Activated B cell treated with CpG ODN at 0.5 μM for 24 hours (primary cell): ENCODE measurements at regions of chr6 and their contacts with region 1.

Region 1: GRCh38 chr6:78538002-78538401 is 329.3 kb upstream of the IRAK1BP1 start:
- DNase-seq: no peak
- ATAC-seq: no peak
- H3K4me3 Mint-ChIP-seq: no peak overlapping the region
- H3K27ac Mint-ChIP-seq: no peak overlapping the region
- H3K4me1 Mint-ChIP-seq: no peaks in the 10 kb centered on the region
- H3K27me3 Mint-ChIP-seq: no peaks in the 10 kb centered on the region
- CTCF ChIP-seq: no peak

Region 2: GRCh38 chr6:78502386-78502887 is 35.6 kb before region 1 on chr6:
- CTCF ChIA-PET with region 1: no interaction called
- POLR2A ChIA-PET with region 1: no interaction called
- intact Hi-C with region 1: loop called (anchors 2 kb)
- DNase-seq: no peak
- ATAC-seq: no peak
- H3K4me3 Mint-ChIP-seq: no peak overlapping the region
- H3K27ac Mint-ChIP-seq: no peak overlapping the region
- H3K4me1 Mint-ChIP-seq: no peaks in the 10 kb centered on the region
- H3K27me3 Mint-ChIP-seq: no peaks in the 10 kb centered on the region
- CTCF ChIP-seq: no peak

Region 3: GRCh38 chr6:78580923-78581322 is 42.9 kb after region 1 on chr6:
- CTCF ChIA-PET with region 1: no interaction called
- POLR2A ChIA-PET with region 1: no interaction called
- intact Hi-C with region 1: no loop called
- DNase-seq: no peak
- ATAC-seq: no peak
- H3K4me3 Mint-ChIP-seq: no peak overlapping the region
- H3K27ac Mint-ChIP-seq: no peak overlapping the region
- H3K4me1 Mint-ChIP-seq: no peaks in the 10 kb centered on the region
- H3K27me3 Mint-ChIP-seq: no peaks in the 10 kb centered on the region
- CTCF ChIP-seq: no peak